AG04449 (cell line): ENCODE measurements at regions of chr6 and their contacts with region 1.

Region 1: DNA sequence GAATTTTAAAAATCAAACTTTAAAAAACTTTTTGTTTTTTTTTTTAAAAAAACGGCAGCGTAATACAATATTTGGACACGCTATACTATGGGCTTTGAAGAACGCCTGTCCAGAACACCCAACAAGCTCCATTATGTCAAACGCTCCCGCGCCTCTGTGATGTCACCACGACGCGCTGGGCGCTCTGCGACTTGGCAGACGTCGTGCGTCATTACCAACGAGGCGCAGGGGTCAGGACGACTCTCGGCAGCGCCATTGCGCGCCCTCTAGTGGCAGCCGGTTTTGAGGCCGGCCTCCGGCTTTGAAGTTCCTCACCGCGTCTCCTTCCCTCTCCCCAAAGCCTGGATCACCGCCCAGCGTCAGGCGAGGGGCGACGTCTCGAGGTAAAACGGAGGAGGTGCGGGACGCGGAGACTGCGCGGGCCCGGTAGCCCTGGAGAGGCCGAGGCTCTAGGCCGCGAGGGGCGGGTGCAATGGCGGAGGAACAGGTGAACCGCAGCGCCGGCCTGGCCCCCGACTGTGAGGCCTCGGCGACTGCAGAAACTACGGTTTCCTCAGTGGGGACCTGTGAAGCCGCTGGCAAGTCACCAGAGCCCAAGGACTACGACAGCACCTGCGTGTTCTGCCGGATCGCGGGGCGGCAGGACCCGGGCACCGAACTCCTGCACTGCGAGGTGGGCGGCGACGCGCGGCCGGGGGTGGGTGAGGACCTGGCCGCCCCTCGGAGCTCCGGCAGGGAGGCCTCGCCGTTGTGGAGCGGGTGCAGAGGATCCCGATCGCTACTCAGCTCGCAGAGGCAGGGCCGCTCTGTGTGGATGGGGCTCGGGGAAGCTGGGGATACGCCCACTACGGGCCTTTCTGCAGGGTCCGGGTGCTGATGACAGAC is at the start of gene HINT3:
- DNase-seq: peak; percentile 79
- H3K4me3 ChIP-seq: peak within 1 kb of the TSS; percentile 91
- CTCF ChIP-seq: peak; percentile 94

Region 2: GRCh38 chr6:125779924-125780539 is 176.7 kb before region 1 on chr6:
- CTCF ChIA-PET with region 1: interaction called, 241 read pairs
- POLR2A ChIA-PET with region 1: interaction called, 3 read pairs
- DNase-seq: no peak
- H3K4me3 ChIP-seq: peak overlapping the region; percentile 73
- CTCF ChIP-seq: no peak

Region 3: DNA sequence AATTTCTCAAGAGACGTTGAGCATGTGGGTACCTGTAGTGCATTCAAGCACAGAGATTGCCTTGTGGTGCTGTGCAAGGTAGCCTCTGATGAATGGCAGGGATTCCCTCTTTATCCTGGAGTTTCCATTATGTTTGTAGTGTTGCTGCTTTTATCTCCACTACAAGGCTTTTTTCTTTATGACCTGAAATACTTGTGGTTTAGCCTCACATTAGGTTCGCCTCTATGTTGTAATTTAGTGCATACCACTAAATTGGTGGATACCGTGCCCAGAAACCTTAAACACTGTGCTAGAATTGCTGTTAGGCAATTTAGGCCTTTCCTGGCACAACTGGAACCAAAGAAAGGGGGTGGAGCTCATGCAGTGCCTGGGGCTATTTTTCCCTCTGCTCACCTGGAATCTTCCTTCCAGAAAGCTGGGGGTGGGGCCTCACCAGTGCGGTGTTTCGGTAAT is 89.2 kb before region 1 on chr6:
- CTCF ChIA-PET with region 1: interaction called, 12 read pairs
- POLR2A ChIA-PET with region 1: no interaction called
- DNase-seq: peak; percentile 41
- H3K4me3 ChIP-seq: no peak overlapping the region
- CTCF ChIP-seq: no peak

Region 4: GRCh38 chr6:125913864-125914351 is 42.8 kb before region 1 on chr6:
- CTCF ChIA-PET with region 1: interaction called, 28 read pairs
- POLR2A ChIA-PET with region 1: interaction called, 4 read pairs
- DNase-seq: peak; percentile 95
- H3K4me3 ChIP-seq: no peak overlapping the region
- CTCF ChIP-seq: no peak

Region 5: DNA sequence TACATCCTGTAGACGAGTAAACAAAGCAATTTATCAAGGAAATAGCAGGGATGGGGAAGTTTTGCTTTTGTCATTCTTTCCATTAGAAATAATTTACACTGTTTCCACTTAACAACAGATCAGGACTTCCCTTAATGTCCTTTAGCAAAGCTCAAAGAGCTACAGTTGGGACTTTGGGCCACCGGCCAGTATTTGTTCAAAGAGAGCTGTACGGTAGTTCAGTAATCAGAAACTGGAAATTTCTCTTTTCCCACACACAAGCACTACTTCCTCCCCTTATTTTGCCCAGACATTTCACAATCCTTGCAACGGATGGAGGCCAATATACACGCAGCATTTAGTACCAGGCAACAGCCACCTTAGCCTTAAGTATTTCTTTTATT is 12.3 kb before region 1 on chr6:
- CTCF ChIA-PET with region 1: interaction called, 106 read pairs
- POLR2A ChIA-PET with region 1: no interaction called
- DNase-seq: no peak
- H3K4me3 ChIP-seq: no peak overlapping the region
- CTCF ChIP-seq: no peak